Activated naive CD4-positive, alpha-beta T cell treated with anti-CD3 and anti-CD28 coated beads, Interleukin-2, amount 10 ng/mL, durations not matched to agents 7 days and 5 days (primary cell): ENCODE measurements at regions of chr3 and their contacts with region 1.

Region 1: GRCh38 chr3:69161587-69162307 is 39.4 kb upstream of the LMOD3 start:
- DNase-seq: peak; percentile 33
- H3K4me3 Mint-ChIP-seq: no peak overlapping the region
- H3K27ac Mint-ChIP-seq: no peak overlapping the region
- H3K4me1 Mint-ChIP-seq: peaks cover 8% of the 10 kb centered on the region
- H3K27me3 Mint-ChIP-seq: no peaks in the 10 kb centered on the region

Region 2: DNA sequence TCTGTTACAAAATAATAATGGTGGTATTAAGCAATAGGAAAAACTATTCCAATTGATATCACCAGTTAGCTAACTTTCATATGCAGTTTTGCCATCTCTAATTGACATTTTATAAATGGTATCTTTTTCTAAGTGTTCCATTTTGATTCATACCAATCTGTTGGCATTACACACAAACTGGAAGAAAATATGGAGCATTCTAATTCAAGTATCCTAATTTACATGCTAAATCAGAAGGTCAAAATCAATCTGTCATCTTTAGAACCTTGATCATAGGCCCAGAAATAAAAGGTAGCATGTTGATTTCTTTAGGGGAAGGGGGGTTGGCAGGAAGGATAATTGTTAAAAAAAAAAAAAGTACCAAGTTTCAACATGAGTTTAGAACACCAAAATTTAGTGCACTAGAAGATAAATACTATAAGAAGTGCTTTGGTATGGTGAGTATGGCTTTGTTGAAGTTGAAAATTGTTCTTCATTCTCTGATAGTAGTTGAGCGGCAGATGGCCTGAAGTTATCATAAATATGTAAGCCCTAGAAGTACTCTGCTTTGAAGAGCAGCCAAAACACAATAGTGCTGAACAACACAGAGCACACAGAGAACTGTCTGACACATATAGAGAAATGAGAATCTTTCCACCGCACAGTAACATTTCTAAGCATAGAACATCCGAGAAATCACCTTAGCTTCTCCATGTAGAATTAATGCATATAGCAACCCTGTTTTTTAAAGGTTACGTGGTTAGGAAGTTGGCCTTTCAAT is 359.5 kb before region 1 on chr3:
- CTCF ChIA-PET with region 1: no interaction called
- DNase-seq: no peak
- H3K4me3 Mint-ChIP-seq: no peak overlapping the region
- H3K27ac Mint-ChIP-seq: no peak overlapping the region
- H3K4me1 Mint-ChIP-seq: no peaks in the 10 kb centered on the region
- H3K27me3 Mint-ChIP-seq: no peaks in the 10 kb centered on the region

Region 3: DNA sequence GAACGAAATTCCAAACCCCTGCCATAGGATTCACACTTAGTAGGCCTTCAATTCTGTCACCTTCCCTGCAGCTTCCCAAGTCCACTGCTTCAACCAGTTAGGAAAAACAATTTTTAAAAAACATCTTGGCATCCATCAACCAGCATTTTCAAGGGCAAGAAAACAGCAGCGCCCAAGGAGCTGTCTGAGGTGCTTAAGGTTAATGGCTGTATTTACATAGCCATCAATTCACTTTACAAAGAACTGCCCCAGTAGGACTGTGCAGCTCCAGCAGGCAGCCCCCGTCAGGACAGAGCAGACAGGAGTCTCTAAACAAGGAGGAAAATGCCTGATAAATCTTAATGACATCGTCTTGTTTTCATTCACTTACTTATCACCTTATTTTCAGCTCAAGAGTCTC is 242.7 kb before region 1 on chr3:
- CTCF ChIA-PET with region 1: no interaction called
- DNase-seq: no peak
- H3K4me3 Mint-ChIP-seq: no peak overlapping the region
- H3K27ac Mint-ChIP-seq: no peak overlapping the region
- H3K4me1 Mint-ChIP-seq: no peaks in the 10 kb centered on the region
- H3K27me3 Mint-ChIP-seq: peaks cover 15% of the 10 kb centered on the region

Region 4: GRCh38 chr3:69120879-69121464 is 40.8 kb before region 1 on chr3:
- CTCF ChIA-PET with region 1: interaction called, 24 read pairs
- DNase-seq: peak; percentile 88
- H3K4me3 Mint-ChIP-seq: no peak overlapping the region
- H3K27ac Mint-ChIP-seq: no peak overlapping the region
- H3K4me1 Mint-ChIP-seq: no peaks in the 10 kb centered on the region
- H3K27me3 Mint-ChIP-seq: peaks cover 21% of the 10 kb centered on the region

Region 5: GRCh38 chr3:69200384-69201068 is 38.8 kb after region 1 on chr3:
- CTCF ChIA-PET with region 1: interaction called, 10 read pairs
- DNase-seq: peak; percentile 52
- H3K4me3 Mint-ChIP-seq: peak overlapping the region; percentile 80
- H3K27ac Mint-ChIP-seq: peak overlapping the region; percentile 95
- H3K4me1 Mint-ChIP-seq: peaks cover 67% of the 10 kb centered on the region
- H3K27me3 Mint-ChIP-seq: no peaks in the 10 kb centered on the region

Region 6: GRCh38 chr3:69250014-69250413 is 88.3 kb after region 1 on chr3:
- CTCF ChIA-PET with region 1: interaction called, 12 read pairs
- DNase-seq: peak; percentile 71
- H3K4me3 Mint-ChIP-seq: peak overlapping the region; percentile 54
- H3K27ac Mint-ChIP-seq: peak overlapping the region; percentile 24
- H3K4me1 Mint-ChIP-seq: peaks cover 13% of the 10 kb centered on the region
- H3K27me3 Mint-ChIP-seq: peaks cover 6% of the 10 kb centered on the region

Region 7: GRCh38 chr3:69306239-69307185 is 144.8 kb after region 1 on chr3:
- CTCF ChIA-PET with region 1: interaction called, 288 read pairs
- DNase-seq: peak; percentile 75
- H3K4me3 Mint-ChIP-seq: no peak overlapping the region
- H3K27ac Mint-ChIP-seq: no peak overlapping the region
- H3K4me1 Mint-ChIP-seq: peaks cover 4% of the 10 kb centered on the region
- H3K27me3 Mint-ChIP-seq: no peaks in the 10 kb centered on the region

Region 8: GRCh38 chr3:69425261-69425660 is 263.5 kb after region 1 on chr3:
- CTCF ChIA-PET with region 1: interaction called, 54 read pairs
- DNase-seq: peak; percentile 41
- H3K4me3 Mint-ChIP-seq: no peak overlapping the region
- H3K27ac Mint-ChIP-seq: no peak overlapping the region
- H3K4me1 Mint-ChIP-seq: peaks cover 2% of the 10 kb centered on the region
- H3K27me3 Mint-ChIP-seq: peaks cover 4% of the 10 kb centered on the region

Region 9: DNA sequence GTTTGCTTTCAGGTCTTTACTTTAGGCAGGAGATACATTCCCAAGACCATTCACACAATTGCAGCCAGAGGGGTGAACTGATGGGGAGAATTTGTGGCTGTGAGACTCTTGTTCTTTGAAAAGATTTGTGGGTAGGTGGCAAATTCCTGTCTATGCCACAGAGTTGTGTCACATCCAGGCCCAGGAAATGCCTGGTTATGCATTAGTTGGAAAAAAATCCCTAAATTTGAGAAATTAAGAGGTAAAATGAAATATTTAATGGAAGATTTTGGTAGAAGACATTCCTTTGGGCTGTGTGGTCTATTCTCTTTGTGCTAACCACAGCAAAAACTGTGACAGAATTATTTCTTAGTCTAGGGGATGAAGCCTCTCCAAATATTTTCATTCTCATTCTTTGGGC is 866.6 kb after region 1 on chr3:
- CTCF ChIA-PET with region 1: no interaction called
- DNase-seq: no peak
- H3K4me3 Mint-ChIP-seq: no peak overlapping the region
- H3K27ac Mint-ChIP-seq: no peak overlapping the region
- H3K4me1 Mint-ChIP-seq: no peaks in the 10 kb centered on the region
- H3K27me3 Mint-ChIP-seq: no peaks in the 10 kb centered on the region